ENCODE measurements at regions of chr2 and their contacts with region 1.

Region 1: GRCh38 chr2:224284134-224284946 is 117.6 kb downstream of the FAM124B start:
- DNase-seq: no peak
- H3K4me3 ChIP-seq: no peak overlapping the region
- H3K27ac ChIP-seq: no peak overlapping the region
- H3K4me1 ChIP-seq: no peaks in the 10 kb centered on the region
- H3K27me3 ChIP-seq: peaks cover 2% of the 10 kb centered on the region
- CTCF ChIP-seq: peak; percentile 55 to 81 (median 79)

Region 2: DNA sequence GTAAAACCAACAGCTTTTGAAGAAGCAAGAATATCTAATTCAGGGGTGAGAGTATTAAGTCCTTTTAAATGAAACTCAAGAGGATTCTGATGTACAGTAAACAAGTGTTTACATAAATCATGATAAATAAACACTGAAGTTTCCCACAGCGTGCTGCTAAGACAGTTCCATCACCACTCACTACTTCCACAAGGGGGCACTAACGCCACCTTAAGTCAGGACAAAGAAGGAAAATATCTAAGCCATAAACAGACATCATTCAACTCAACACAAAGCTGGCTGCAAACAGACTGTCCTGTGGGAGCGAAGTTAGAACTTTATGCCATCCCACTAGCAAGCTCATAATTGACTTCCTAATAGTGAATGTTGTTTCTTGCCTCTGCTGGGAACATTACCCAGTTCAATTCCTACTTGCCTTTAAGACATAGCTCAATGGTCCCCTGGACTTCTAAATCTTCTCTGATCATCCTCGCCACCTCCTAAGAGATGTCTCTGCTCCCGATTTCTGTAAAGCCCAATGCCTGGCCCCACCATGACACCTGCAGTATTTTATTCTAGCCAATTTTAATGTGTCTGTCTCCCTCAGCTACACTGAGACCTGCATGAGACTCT is 290.6 kb before region 1 on chr2:
- dilution Hi-C with region 1: loop called (anchors 25 kb)
- DNase-seq: peak; percentile 58
- H3K4me3 ChIP-seq: no peak overlapping the region
- H3K27ac ChIP-seq: no peak overlapping the region
- H3K4me1 ChIP-seq: peaks cover 12% of the 10 kb centered on the region
- H3K27me3 ChIP-seq: no peaks in the 10 kb centered on the region
- CTCF ChIP-seq: peak; percentile 62 to 80 (median 66)

Region 3: DNA sequence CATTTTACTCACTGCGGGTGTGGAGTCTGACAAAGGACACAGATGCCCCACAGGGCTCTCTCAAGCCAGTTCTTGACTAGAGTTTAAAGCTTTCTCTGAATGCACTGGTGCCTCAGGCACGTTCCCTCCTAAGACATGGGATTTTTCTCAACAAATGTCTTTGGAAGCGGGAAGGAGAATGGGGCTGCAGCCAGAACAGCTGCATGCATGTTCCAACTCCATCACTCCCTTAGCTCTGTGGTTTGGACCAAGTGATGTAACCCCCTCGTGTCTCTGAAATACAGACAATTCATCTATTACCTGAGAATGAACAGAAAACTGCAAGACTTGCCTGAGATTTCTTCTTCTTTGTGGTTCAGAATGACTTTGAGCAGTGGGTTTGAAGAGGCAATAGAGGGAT is 103.5 kb before region 1 on chr2:
- dilution Hi-C with region 1: no loop called
- DNase-seq: no peak
- H3K4me3 ChIP-seq: no peak overlapping the region
- H3K27ac ChIP-seq: no peak overlapping the region
- H3K4me1 ChIP-seq: peaks cover 22% of the 10 kb centered on the region
- H3K27me3 ChIP-seq: no peaks in the 10 kb centered on the region
- CTCF ChIP-seq: no peak

Region 4: GRCh38 chr2:224195925-224196571 is 88.3 kb before region 1 on chr2:
- dilution Hi-C with region 1: no loop called
- DNase-seq: no peak
- H3K4me3 ChIP-seq: no peak overlapping the region
- H3K27ac ChIP-seq: no peak overlapping the region
- H3K4me1 ChIP-seq: no peaks in the 10 kb centered on the region
- H3K27me3 ChIP-seq: no peaks in the 10 kb centered on the region
- CTCF ChIP-seq: no peak

Region 5: GRCh38 chr2:224222291-224222690 is 62.0 kb before region 1 on chr2:
- dilution Hi-C with region 1: no loop called
- DNase-seq: no peak
- H3K4me3 ChIP-seq: no peak overlapping the region
- H3K27ac ChIP-seq: peak overlapping the region; percentile 93
- H3K4me1 ChIP-seq: peaks cover 27% of the 10 kb centered on the region
- H3K27me3 ChIP-seq: no peaks in the 10 kb centered on the region
- CTCF ChIP-seq: no peak

Region 6: DNA sequence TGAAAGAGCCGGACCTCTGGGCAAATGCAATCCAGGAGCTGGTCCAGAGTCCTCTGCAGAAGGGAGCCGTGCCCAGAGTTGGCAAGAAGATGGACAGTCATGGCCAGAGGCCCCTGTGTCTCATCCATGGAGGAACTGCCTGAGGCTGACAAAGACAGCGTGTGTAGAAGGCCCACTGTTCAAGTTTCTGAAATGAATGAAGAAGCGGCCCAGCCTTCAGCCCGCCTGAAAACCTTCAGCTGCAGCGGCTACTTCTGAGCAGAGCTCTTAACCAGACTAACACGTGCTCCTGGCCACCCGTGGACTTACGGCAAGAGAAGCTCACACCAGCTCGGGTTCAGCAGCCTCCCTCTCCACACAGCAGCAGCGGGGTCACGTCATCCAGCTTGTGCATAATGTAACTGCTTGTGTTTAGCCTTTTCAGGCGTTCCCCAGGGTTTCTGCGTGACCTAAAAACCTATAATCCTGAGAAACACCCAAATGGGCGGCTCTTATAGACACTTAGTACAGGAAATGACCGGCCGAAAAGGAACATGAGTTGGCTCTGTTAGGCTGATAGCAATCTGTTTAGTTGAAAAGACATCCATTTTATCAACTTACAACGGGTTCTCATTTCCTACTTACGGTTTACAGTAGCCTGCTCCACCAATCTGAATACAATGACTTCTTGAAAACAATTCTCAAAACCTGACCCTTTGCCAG is 117.5 kb after region 1 on chr2 and contains the start of gene FAM124B:
- dilution Hi-C with region 1: no loop called
- DNase-seq: no peak
- H3K4me3 ChIP-seq: no peak within 1 kb of the TSS
- H3K27ac ChIP-seq: no peak within 1 kb of the TSS
- H3K4me1 ChIP-seq: no peaks in the 10 kb centered on the region
- H3K27me3 ChIP-seq: no peaks in the 10 kb centered on the region
- CTCF ChIP-seq: no peak
- polyA plus RNA-seq, gene FAM124B: 0.03 to 0.04 TPM (median 0.03 TPM) in 3 replicates

Measured in keratinocyte (primary cell).